Right ventricle myocardium superior (tissue), 1 donor: ENCODE measurements at regions of chr2 and their contacts with region 1.

Region 1: DNA sequence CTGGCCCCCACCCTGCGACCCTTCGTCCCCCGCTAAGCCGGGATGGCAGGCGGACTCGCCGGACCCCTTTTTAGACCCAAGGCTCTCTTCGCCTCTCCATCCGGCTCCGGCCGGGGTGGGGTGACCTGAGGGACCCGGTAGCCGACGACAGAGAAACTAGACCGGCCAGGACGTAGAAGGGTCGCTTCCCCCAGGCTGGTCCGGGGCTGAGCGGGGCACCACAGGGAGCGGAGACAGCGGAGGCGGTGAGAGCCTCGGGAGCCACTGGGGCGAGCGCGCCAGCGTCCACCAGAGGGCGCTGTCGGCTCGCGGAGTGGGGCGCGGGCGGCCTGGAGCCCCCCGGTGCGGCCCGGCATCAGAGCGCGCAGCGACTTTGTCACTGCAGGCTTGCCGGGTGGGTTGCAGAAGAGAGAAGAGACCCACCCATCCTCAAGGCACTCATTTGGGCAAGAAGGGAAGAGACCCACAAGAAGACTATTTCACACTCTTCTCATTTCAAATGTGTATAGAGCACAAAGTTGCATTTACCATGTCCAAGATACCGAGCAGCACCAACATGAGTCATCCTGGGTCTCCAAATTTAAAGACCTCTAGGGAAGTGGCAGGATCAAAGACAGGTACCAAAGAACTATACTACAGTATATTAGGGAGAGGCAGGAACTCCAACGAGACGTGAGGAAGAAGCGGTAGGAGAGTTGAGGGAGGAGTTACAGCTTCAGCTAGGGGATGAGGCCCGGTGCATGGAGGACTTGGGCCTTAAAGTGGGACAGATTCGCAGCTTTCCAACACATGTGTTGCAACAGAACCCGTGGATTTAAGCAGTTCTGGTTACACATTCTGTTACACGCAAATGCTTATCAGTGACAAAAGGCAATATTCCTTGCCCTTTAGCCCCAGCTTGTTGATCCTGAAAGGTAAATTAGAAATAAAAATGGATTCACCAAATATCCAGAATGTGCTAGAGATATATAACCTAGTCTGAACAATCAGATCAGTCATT is 7.6 kb upstream of the PRKCE start:
- DNase-seq: peak; percentile 83
- ATAC-seq: peak; percentile 99

Region 2: GRCh38 chr2:45220227-45220626 is 423.6 kb before region 1 on chr2:
- intact Hi-C with region 1: no loop called
- DNase-seq: no peak
- ATAC-seq: no peak

Region 3: GRCh38 chr2:45777997-45778719 is 134.3 kb after region 1 on chr2:
- intact Hi-C with region 1: loop called (anchors 2 kb)
- DNase-seq: no peak
- ATAC-seq: peak; percentile 7

Region 4: GRCh38 chr2:45813003-45813941 is 169.4 kb after region 1 on chr2:
- intact Hi-C with region 1: no loop called
- DNase-seq: peak; percentile 53
- ATAC-seq: peak; percentile 38

Region 5: DNA sequence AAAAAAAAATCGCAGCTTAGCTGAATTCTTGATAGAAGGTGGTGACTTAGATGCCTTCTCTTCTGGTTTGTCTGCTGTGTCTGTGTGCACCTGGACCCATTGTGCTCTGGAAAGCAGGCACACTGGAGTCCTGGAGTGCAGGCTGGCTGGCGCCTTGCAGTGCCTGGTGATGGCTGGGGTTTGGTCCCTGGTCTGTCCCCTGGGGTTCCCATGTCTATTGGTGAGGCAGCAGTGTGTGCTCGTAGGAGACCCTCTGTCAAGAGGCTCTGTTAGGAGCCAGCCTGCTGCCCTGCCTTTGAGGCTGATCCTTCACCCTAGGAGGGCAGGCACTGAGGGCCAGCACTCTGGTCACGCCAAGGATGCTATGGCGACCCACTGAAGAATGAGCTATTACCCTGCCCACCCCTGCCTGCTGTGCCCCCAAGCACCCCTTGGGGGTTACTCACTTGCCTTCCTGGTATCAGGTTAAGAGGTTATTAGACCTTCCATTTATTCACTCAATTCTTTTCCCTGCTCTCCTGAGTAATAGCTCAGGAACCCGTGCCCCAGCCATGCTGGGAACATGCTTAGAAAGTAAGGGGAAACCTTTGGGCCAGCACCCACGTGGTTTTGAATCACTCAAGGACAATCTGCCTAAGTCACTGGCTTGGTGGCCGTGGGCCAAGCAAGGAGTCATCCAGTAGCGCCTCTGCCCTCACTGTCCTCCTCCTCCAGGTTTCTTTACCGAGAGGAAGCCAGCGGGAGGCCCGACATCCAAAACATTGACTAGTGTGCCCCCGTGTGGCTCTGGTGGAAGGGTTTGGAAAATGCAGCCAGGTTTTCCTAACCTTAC is 292.2 kb after region 1 on chr2:
- intact Hi-C with region 1: loop called (anchors 2 kb)
- DNase-seq: peak; percentile 95
- ATAC-seq: peak; percentile 89